ENCODE measurements at regions of chr6 and their contacts with region 1.

Region 1: DNA sequence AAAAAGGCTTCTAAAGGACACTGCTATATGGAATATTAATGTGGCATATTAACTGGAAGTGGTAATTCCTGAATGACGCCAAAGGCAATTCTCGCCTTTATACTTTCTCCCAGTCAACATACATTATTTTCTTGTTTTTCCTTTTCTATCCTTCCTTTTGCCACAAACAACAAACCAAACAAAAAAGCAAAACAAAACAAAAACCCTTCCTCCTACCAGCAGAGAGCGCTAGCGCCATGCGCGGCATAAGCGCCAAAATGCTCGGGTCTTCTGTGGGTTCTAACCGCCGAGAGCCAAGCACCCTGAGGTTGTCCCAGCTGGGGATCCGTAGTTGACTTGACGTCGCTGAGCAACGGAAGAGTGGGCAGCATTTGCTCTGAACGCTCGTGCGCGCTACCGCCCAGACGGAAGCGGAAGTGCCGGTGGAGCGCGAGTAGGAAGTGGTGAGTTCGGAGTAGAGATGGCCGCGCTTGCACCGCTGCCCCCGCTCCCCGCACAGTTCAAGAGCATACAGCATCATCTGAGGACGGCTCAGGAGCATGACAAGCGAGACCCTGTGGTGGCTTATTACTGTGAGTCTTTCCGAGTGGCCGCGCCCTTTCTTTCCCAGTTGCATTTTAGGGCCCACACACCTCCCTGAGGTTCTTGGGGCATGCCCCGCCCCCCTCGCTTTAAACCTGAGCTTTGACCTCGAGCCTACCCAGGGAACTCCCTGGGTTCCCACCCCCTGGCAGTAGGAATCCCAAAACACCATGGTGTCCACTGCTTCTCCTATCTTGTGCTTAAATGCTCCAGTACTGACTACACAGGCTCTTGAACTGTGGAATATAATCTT is at the starts of genes NMBR and VTA1:
- DNase-seq: peak; percentile 98
- H3K4me3 ChIP-seq: peak within 1 kb of the TSS; percentile 57 to 72 (median 68)
- H3K27ac ChIP-seq: peak within 1 kb of the TSS; percentile 60
- H3K4me1 ChIP-seq: peaks cover 10% of the 10 kb centered on the region
- H3K27me3 ChIP-seq: no peaks in the 10 kb centered on the region
- CTCF ChIP-seq: peak; percentile 85 to 90
- total RNA-seq, gene NMBR: not detected
- total RNA-seq, gene VTA1: 52.8 to 96.7 TPM

Region 2: DNA sequence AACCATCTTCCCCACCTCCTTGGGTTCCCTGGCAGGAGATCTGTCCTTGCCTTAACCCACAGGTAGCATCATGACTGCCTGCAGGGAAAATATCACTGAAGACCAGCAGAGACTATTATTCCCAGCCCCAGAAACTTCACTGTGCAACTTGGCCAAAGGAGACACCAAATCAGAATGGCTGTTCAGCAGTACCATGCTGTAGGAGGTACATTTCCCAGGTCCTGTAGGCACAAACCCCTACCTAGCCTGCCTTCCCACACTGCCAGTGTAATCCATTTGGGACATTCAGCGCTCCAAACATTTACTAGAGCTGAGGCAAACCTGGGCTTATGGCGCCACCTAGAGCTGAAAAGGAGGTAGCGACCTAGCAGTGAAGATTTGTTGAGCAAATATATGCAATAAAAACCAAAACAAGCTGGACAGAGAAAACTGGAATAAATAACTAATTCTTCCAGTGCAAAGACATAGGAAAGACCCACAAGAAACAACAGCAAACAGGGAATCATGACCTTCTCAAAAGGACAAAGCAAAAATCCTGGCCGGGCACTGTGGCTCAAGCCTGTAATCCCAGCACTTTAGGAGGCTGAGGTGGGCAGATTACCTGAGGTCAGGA is 60.3 kb after region 1 on chr6:
- CTCF ChIA-PET with region 1: no interaction called
- dilution Hi-C with region 1: no loop called
- in situ Hi-C with region 1: no loop called
- intact Hi-C with region 1: loop called (anchors 1 kb)
- DNase-seq: peak; percentile 32
- H3K4me3 ChIP-seq: no peak overlapping the region
- H3K27ac ChIP-seq: no peak overlapping the region
- H3K4me1 ChIP-seq: no peaks in the 10 kb centered on the region
- H3K27me3 ChIP-seq: no peaks in the 10 kb centered on the region
- CTCF ChIP-seq: peak; percentile 82 to 92

Region 3: DNA sequence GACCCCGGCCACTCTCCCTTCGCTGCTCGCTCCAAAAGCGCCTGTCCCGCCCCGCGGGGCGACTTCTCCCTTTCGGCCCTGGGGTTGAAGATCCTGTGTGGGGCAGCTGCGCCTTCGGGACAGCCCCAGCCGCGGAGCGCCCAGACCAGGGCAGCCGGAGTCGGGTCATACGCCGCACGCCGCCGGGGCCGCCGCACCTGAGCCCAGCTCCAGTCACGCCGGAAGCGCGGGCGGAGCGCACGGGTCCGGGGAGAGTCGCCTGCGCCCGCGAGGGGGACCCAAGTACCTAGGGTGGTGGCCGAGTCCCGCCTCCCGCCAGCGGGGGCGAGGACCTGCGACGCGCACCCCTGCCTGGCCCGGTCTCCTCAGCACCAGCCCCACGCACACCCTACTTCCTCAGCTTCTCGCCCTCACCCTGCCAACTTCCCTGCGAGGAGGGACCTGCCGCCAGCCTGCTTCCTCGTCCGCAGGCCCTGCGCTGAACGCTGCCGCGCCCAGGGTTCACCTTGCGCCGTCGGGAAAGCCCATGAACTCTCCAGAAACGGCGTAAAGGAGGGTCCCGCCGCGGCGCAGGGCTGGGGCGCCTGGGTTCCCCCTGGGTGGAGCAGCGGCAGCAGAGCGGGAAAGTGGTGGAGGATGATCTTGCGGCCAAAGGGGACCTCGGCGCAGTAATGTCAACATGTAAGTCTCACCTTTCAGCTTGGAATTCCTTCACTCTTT is 154.8 kb after region 1 on chr6 and contains the start of gene ADGRG6:
- CTCF ChIA-PET with region 1: no interaction called
- dilution Hi-C with region 1: no loop called
- in situ Hi-C with region 1: no loop called
- intact Hi-C with region 1: loop called (anchors 2 kb)
- DNase-seq: peak; percentile 65
- H3K4me3 ChIP-seq: peak within 1 kb of the TSS; percentile 69 to 78 (median 70)
- H3K27ac ChIP-seq: peak within 1 kb of the TSS; percentile 78
- H3K4me1 ChIP-seq: peaks cover 43% of the 10 kb centered on the region
- H3K27me3 ChIP-seq: no peaks in the 10 kb centered on the region
- CTCF ChIP-seq: peak in 1 of 2 donors; percentile 25
- total RNA-seq, gene ADGRG6: 23.5 to 28.5 TPM

Region 4: GRCh38 chr6:142387997-142388815 is 241.2 kb after region 1 on chr6:
- CTCF ChIA-PET with region 1: no interaction called
- dilution Hi-C with region 1: loop called (anchors 10 kb)
- in situ Hi-C with region 1: loop called (anchors 10 kb)
- intact Hi-C with region 1: loop called (anchors 2 kb)
- DNase-seq: peak; percentile 16
- H3K4me3 ChIP-seq: no peak overlapping the region
- H3K27ac ChIP-seq: no peak overlapping the region
- H3K4me1 ChIP-seq: no peaks in the 10 kb centered on the region
- H3K27me3 ChIP-seq: no peaks in the 10 kb centered on the region
- CTCF ChIP-seq: peak; percentile 70 to 71

Region 5: GRCh38 chr6:142395768-142396231 is 248.8 kb after region 1 on chr6:
- CTCF ChIA-PET with region 1: no interaction called
- dilution Hi-C with region 1: loop called (anchors 10 kb)
- in situ Hi-C with region 1: loop called in 1 of 2 experiments (anchors 10 kb)
- intact Hi-C with region 1: no loop called
- DNase-seq: no peak
- H3K4me3 ChIP-seq: no peak overlapping the region
- H3K27ac ChIP-seq: no peak overlapping the region
- H3K4me1 ChIP-seq: no peaks in the 10 kb centered on the region
- H3K27me3 ChIP-seq: no peaks in the 10 kb centered on the region
- CTCF ChIP-seq: no peak

Region 6: DNA sequence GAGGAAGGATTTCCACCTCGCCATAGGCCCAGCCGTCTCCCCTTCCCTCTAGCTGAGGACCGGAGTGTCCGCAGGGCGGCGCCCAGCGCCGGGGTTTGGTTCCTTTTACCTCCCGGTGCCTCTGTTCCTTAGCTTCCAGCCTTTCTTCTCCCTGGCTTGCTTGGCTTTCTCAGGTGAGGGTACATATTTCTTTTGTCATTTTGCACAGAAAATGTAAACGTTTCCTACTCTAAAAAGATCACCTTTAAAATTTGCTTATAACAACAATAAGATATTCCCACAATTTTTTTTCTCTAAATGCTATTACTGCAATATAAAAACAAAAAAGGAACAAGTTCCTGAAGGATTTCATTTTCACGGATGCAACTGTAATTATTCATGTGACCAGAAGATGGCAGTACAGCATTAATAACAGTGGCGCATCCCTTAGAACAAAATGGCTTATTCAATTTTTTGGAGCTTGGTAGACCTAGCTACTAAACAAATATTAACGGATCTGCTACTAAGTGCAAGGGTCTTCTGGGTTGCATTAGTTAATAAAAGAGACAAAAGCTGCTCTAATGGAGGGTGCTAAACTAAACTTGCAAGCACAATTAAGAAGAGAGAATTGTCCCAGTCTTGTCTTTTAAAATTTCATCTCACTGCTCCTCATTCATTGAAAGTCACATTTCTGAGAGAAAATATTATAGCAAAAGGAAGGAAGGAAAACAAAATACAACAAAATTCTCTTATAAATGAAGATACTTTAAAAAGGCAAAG is 327.7 kb after region 1 on chr6:
- CTCF ChIA-PET with region 1: no interaction called
- dilution Hi-C with region 1: no loop called
- in situ Hi-C with region 1: no loop called
- intact Hi-C with region 1: loop called (anchors 2 kb)
- DNase-seq: peak; percentile 68
- H3K4me3 ChIP-seq: peak overlapping the region in 1 of 3 experiments; percentile 32
- H3K27ac ChIP-seq: no peak overlapping the region
- H3K4me1 ChIP-seq: peaks cover 3% of the 10 kb centered on the region
- H3K27me3 ChIP-seq: no peaks in the 10 kb centered on the region
- CTCF ChIP-seq: peak; percentile 63 to 65

Region 7: DNA sequence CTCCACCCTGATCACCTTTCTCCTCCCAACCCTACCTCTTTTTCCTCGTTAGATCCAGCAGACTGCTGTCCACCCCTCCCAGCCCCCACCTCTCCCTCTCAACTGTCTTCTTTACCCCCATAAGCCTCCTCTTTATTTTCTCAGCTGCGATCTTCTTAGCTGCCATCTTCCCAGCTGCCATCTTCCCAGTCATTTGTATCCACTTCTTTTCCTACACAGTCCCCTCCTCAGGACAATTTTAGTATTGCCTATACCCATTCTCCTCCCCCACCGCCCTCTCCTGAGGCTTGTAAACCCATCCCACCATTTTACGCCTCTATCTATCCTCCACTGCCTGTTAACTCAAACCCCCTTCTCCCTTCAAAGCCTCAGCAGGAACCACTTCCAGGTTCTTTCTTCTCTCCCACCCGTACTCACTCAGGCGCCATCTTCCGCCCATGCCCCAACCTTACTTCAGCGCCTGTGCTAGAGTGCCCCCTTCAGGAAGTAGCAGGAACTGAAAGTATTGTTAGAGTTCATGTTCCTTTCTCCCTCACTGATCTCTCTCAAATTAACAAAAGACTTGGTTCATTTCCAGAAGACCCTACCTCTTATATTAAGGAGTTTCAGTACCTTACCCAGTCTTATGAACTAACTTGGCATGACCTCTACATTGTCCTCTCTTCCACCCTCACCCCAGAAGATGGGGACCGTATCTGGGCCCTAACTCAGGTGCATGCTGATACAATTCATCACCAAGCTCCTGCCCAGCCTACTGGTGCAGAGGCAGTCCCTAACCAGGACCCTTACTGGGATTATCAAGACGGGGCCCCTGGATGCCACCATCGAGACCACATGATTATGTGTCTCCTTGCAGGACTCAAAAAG is 390.8 kb after region 1 on chr6:
- CTCF ChIA-PET with region 1: no interaction called
- dilution Hi-C with region 1: no loop called
- in situ Hi-C with region 1: no loop called
- intact Hi-C with region 1: loop called (anchors 2 kb)
- DNase-seq: peak; percentile 18
- H3K4me3 ChIP-seq: no peak overlapping the region
- H3K27ac ChIP-seq: no peak overlapping the region
- H3K4me1 ChIP-seq: peaks cover 8% of the 10 kb centered on the region
- H3K27me3 ChIP-seq: no peaks in the 10 kb centered on the region
- CTCF ChIP-seq: peak; percentile 67 to 79